Activated B cell treated with CpG ODN at 0.5 μM for 24 hours (primary cell): ENCODE measurements at regions of chr1 and their contacts with region 1.

Region 1: GRCh38 chr1:94805912-94806311 is 14.2 kb upstream of the SLC44A3 start:
- DNase-seq: peak; percentile 27
- ATAC-seq: peak; percentile 89
- H3K4me3 Mint-ChIP-seq: no peak overlapping the region
- H3K27ac Mint-ChIP-seq: no peak overlapping the region
- H3K4me1 Mint-ChIP-seq: peaks cover 7% of the 10 kb centered on the region
- H3K27me3 Mint-ChIP-seq: peaks cover 6% of the 10 kb centered on the region
- CTCF ChIP-seq: peak; percentile 87

Region 2: GRCh38 chr1:93437976-93438605 is 1367.8 kb before region 1 on chr1:
- CTCF ChIA-PET with region 1: no interaction called
- POLR2A ChIA-PET with region 1: no interaction called
- intact Hi-C with region 1: loop called (anchors 2 kb)
- DNase-seq: no peak
- ATAC-seq: peak; percentile 76
- H3K4me3 Mint-ChIP-seq: no peak overlapping the region
- H3K27ac Mint-ChIP-seq: no peak overlapping the region
- H3K4me1 Mint-ChIP-seq: peaks cover 3% of the 10 kb centered on the region
- H3K27me3 Mint-ChIP-seq: peaks cover 3% of the 10 kb centered on the region
- CTCF ChIP-seq: no peak

Region 3: GRCh38 chr1:94039514-94039870 is 766.4 kb before region 1 on chr1:
- CTCF ChIA-PET with region 1: interaction called, 10 read pairs
- POLR2A ChIA-PET with region 1: no interaction called
- intact Hi-C with region 1: no loop called
- DNase-seq: no peak
- ATAC-seq: no peak
- H3K4me3 Mint-ChIP-seq: no peak overlapping the region
- H3K27ac Mint-ChIP-seq: no peak overlapping the region
- H3K4me1 Mint-ChIP-seq: peaks cover 4% of the 10 kb centered on the region
- H3K27me3 Mint-ChIP-seq: peaks cover 32% of the 10 kb centered on the region
- CTCF ChIP-seq: no peak

Region 4: GRCh38 chr1:94481473-94481933 is 324.4 kb before region 1 on chr1:
- CTCF ChIA-PET with region 1: interaction called, 143 read pairs
- POLR2A ChIA-PET with region 1: no interaction called
- intact Hi-C with region 1: loop called (anchors 1 kb)
- DNase-seq: no peak
- ATAC-seq: peak; percentile 71
- H3K4me3 Mint-ChIP-seq: no peak overlapping the region
- H3K27ac Mint-ChIP-seq: no peak overlapping the region
- H3K4me1 Mint-ChIP-seq: no peaks in the 10 kb centered on the region
- H3K27me3 Mint-ChIP-seq: no peaks in the 10 kb centered on the region
- CTCF ChIP-seq: peak; percentile 66